Heart left ventricle (tissue), 16 donors: ENCODE measurements at regions of chr4 and their contacts with region 1.

Region 1: DNA sequence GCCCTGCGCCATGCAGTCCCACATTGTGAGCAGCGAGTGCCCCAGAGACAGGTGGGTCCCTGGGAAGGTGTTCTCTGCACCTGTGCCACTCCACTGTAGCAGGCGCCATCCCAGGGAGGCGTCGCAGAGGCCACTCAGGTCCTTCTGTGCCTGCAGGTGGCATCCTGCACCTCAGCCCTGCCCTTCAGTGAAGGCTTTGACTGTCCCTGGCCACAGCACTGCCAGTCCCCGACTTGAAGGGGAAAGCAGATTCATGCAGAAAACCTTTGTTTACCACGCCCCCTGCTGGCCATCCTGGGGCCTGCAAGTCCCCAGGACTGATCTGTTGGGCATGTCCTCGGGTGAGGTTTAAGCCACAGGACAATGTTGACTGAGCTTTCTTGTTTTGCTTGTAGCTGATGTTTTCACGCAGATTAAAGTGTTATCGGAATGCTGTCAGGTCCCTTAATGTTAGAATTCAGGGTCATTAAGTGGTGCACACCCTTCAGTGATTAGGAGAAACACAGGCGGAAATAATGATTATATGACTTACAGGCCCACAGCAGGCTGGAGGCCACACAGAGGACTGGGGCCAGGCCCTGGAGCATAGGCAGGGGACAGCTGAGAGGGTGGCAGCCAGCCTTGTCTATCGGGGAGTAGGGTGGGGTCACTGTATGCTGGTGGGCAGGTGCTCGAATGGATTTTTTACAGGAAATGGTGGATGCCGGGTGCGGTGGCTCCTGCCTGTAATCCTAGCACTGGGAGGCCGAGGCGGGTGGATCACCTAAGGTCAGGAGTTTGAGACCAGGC is 5.0 kb downstream of the TACC3 start:
- DNase-seq: peak; percentile 84 to 94 (median 88)
- ATAC-seq: peak; percentile 47 to 75 (median 56)
- H3K4me3 ChIP-seq: no peak overlapping the region
- H3K27ac ChIP-seq: peak overlapping the region; percentile 48 to 87 (median 76)
- H3K4me1 ChIP-seq: peaks cover 10 to 84% (median 34%) of the 10 kb centered on the region in 12 donors
- H3K27me3 ChIP-seq: no peaks in the 10 kb centered on the region
- CTCF ChIP-seq: peak; percentile 97 to 100 (median 98)
- POLR2A ChIP-seq: no peak

Region 2: DNA sequence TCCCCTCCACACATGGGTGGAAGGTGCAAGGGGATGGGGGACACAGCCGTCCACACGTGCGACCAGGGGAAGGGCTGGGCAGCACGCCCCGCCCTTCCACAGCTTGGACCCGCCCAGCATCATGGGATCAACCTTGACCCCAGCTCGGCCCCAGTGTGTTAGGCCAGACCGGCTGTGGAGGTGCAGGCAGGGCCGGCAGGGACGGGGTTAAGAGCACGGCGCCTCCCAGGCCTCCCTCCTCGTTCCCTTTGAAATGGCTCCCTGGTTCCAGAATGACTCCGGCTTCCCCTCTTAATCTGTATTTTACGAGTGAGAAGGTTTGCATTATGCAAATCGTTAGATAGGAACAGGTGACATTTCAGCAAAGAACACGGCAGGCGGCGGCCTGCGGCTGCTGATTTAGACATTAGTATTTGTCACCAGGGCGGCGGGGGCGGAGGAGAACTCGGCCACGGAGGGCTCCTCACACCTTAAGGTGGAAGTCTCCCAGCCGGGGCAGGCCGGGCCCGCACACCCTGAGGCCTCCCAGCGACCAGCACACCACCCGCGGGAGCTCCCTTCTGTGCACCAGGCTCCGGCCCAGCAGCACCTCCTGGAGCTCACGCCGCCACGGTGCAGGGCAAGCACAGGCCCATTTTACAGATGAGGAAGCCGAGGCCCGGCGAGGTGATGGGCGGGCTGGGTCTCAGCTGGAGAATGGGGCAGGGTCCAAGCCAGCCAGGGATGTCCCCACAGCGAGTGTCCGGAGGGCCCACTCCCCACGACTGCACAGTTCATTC is 158.3 kb before region 1 on chr4:
- intact Hi-C with region 1: no loop called
- DNase-seq: peak in 3 of 5 donors; percentile 14 to 56 (median 24)
- ATAC-seq: no peak
- H3K4me3 ChIP-seq: no peak overlapping the region
- H3K27ac ChIP-seq: no peak overlapping the region
- H3K4me1 ChIP-seq: no peaks in the 10 kb centered on the region
- H3K27me3 ChIP-seq: peaks cover 0 to 44% (median 19%) of the 10 kb centered on the region in 9 donors
- CTCF ChIP-seq: no peak
- POLR2A ChIP-seq: no peak

Region 3: GRCh38 chr4:1693129-1693896 is 33.0 kb before region 1 on chr4:
- intact Hi-C with region 1: loop called (anchors 1 to 2 kb)
- DNase-seq: peak; percentile 67 to 85 (median 69)
- ATAC-seq: peak; percentile 25 to 78 (median 78)
- H3K4me3 ChIP-seq: no peak overlapping the region
- H3K27ac ChIP-seq: no peak overlapping the region
- H3K4me1 ChIP-seq: no peaks in the 10 kb centered on the region
- H3K27me3 ChIP-seq: no peaks in the 10 kb centered on the region
- CTCF ChIP-seq: peak; percentile 81 to 96 (median 90)
- POLR2A ChIP-seq: no peak

Region 4: GRCh38 chr4:2462218-2462991 is 736.1 kb after region 1 on chr4:
- intact Hi-C with region 1: no loop called
- DNase-seq: peak; percentile 67 to 84 (median 73)
- ATAC-seq: peak; percentile 68 to 96 (median 90)
- H3K4me3 ChIP-seq: peak overlapping the region; percentile 35 to 80 (median 60)
- H3K27ac ChIP-seq: peak overlapping the region in 9 of 12 donors; percentile 6 to 78 (median 62)
- H3K4me1 ChIP-seq: peaks cover 0 to 18% (median 11%) of the 10 kb centered on the region in 12 donors
- H3K27me3 ChIP-seq: peaks cover 0 to 12% (median 0%) of the 10 kb centered on the region in 9 donors
- CTCF ChIP-seq: peak in 11 of 12 donors; percentile 33 to 79 (median 66)
- POLR2A ChIP-seq: no peak